ENCODE measurements at regions of chr11 and their contacts with region 1.

Region 1: DNA sequence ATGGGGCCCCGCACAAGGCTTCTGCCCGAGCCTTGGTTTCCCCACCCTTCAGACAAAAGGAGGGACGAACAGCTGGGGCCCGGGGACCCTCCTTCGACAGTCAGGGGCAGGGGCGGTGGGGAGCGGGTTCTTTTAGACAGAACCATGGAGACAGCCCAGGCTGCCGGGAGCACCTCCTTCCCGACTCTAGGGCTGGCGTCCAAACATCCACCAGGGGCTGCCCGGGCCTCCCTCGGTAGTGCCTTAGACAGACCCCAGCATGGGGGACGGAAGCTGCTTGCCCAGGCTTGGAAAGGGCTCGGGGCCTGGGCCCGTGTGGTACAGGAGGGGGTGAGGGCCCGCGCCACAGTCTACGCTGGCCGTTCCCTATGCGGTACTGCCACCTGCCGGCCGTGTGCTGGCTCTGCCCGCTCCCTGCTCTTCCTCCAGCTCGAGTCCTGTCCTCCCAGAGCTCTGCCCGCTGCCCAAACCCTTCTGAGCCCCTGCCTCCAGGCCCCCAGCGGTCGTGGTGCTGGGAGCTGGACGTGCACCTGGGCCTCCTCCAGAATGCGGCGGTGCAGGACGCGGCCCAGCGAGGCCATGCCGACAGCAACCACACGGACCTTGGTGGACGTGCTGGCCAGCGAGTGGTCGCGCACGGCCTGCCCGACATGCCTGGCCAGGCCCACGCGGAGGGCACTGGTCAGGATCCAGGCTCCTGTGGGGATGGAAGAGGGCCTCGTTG is 20.1 kb downstream of the TSSC4 start:
- DNase-seq: peak; percentile 96
- CTCF ChIP-seq: peak; percentile 96

Region 2: GRCh38 chr11:2208691-2209369 is 211.8 kb before region 1 on chr11:
- in situ Hi-C with region 1: loop called (anchors 10 kb)
- DNase-seq: peak; percentile 19
- CTCF ChIP-seq: no peak

Region 3: GRCh38 chr11:2314525-2315394 is 105.9 kb before region 1 on chr11:
- in situ Hi-C with region 1: loop called (anchors 10 kb)
- DNase-seq: no peak
- CTCF ChIP-seq: no peak

Region 4: DNA sequence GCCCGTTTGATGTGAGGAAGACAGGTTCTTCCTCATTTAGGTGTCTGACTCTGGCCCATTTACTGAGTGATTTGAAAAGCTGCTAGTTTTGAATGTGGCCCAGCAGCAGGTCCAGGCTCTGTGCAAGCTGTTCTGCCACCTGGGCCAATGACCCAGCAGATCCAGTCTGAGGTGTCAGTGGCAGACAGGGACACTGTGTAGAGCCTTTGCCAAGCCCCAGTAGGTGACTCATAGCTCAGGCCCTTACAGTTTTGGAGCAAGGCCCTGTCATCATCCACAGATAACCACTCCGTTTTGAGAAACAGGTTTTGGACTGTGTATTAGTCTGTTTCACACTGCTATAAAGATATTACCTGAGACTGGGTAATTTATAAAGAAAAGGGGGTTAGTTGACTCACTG is 94.9 kb before region 1 on chr11:
- in situ Hi-C with region 1: no loop called
- DNase-seq: no peak
- CTCF ChIP-seq: no peak

Region 5: GRCh38 chr11:2348986-2349385 is 71.7 kb before region 1 on chr11:
- in situ Hi-C with region 1: no loop called
- DNase-seq: no peak
- CTCF ChIP-seq: no peak

Measured in GM13976 (cell line).